Aorta (tissue), 5 donors: ENCODE measurements at regions of chr14 and their contacts with region 1.

Region 1: DNA sequence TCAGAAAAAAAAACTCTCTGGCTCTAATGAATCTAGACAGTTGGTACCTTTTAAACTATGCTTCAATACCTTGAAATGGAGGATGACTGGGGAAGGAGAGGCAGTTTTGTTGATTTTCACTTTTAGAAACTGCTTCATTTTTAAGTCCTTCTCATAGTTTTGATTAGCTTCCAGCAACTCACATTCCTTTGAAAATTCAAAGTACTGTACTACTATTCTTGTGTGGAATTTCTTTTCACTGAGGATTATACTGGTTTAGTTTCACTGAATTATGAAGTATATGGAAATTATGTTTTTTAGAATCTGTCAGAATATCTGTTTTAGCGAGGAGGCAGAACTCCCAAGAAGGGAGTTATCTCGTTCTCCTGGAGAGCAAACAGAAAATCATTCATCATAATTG is 116.3 kb downstream of the TGFB3 start:
- DNase-seq: no peak
- ATAC-seq: no peak
- H3K4me3 ChIP-seq: no peak overlapping the region
- H3K27ac ChIP-seq: no peak overlapping the region
- H3K4me1 ChIP-seq: peaks cover 5 to 6% of the 10 kb centered on the region in 2 donors
- H3K27me3 ChIP-seq: no peaks in the 10 kb centered on the region

Region 2: GRCh38 chr14:75675265-75675960 is 190.1 kb before region 1 on chr14:
- intact Hi-C with region 1: no loop called
- DNase-seq: no peak
- ATAC-seq: no peak
- H3K4me3 ChIP-seq: no peak overlapping the region
- H3K27ac ChIP-seq: no peak overlapping the region
- H3K4me1 ChIP-seq: peaks cover 0 to 1% of the 10 kb centered on the region in 2 donors
- H3K27me3 ChIP-seq: no peaks in the 10 kb centered on the region

Region 3: GRCh38 chr14:75769047-75769685 is 96.4 kb before region 1 on chr14:
- intact Hi-C with region 1: no loop called
- DNase-seq: no peak
- ATAC-seq: peak; percentile 36
- H3K4me3 ChIP-seq: no peak overlapping the region
- H3K27ac ChIP-seq: no peak overlapping the region
- H3K4me1 ChIP-seq: peaks cover 4 to 5% of the 10 kb centered on the region in 2 donors
- H3K27me3 ChIP-seq: no peaks in the 10 kb centered on the region

Region 4: DNA sequence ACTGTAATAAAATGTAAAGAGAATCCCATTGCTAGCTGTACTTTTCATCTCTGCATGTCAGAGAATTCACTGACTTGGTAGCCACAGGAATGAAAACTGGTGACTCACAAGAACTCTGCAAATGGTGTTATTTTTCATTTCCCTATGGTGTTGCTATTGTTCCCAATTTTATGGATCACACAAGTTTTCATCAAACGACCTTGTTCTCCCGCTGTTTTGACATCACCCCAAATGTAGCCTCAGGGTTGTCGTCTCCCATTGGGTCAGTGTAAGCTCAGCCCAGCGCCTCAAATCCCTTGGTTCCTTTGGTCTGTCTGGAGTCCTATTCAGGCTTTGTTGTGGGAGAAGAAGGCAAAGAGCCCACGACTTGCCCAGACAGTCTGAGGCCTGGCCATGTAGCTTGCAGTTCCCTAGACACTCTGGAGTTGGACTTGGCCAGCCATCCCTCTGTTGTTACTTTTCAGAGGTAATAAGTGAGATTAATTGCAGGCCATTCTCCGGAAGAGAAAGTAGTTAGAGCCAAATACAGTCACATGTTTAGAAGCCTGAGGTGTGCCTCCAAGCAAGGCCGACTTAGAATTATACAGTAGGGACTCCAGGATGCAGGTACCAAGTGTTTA is 42.9 kb before region 1 on chr14:
- intact Hi-C with region 1: loop called in 1 of 2 experiments (anchors 5 kb)
- DNase-seq: peak in 1 of 2 donors; percentile 61
- ATAC-seq: peak; percentile 55
- H3K4me3 ChIP-seq: no peak overlapping the region
- H3K27ac ChIP-seq: peak overlapping the region; percentile 68 to 82
- H3K4me1 ChIP-seq: peaks cover 2 to 11% of the 10 kb centered on the region in 2 donors
- H3K27me3 ChIP-seq: no peaks in the 10 kb centered on the region

Region 5: DNA sequence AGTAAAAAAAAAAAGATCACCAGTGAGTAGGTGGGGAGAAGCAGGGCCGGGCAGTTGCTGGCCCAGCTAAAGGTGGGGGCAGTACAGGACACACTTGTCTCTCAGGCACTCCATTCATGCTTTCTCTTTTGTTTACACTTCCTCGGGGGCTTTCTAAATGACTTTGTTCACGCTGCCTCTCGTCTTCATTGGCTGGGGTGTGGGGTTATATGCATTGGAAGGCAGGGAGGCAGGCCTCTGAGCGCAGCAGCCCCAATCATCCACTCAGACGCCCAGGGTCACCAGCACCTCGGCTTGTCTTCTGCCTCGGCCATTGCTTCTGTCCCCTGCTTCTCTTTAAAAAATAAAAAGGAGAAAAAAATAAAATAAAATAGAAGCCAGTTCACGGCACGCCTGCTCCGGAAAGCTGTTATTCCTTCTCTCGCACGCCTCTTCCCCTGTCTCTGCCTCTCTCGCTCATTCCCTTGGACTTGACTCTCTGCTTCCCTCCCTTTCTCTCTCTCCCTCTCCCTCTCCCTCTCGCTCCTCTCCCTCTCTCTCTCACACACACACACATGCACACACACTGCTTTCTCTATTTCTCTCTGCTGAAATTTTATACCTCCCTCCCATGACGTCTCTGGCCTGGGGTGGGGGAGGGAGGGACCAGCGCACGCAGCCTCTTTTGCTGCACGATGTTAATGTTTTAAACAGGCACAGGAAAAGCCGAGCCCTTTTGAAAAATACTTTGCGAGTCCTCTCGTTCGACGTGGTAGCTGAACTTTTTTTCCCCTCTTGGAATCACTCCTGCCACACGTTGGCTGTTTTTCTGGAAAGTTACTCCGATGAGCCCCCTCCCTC is 116.1 kb after region 1 on chr14 and contains the start of gene TGFB3:
- intact Hi-C with region 1: no loop called
- DNase-seq: peak; percentile 83 to 90
- ATAC-seq: peak; percentile 86
- H3K4me3 ChIP-seq: peak within 1 kb of the TSS; percentile 84 to 92
- H3K27ac ChIP-seq: peak within 1 kb of the TSS; percentile 95 to 99
- H3K4me1 ChIP-seq: peaks cover 0 to 2% of the 10 kb centered on the region in 2 donors
- H3K27me3 ChIP-seq: no peaks in the 10 kb centered on the region
- total RNA-seq, gene TGFB3: 134 to 405 TPM